Heart right ventricle (tissue), 16 donors: ENCODE measurements at regions of chr9 and their contacts with region 1.

Region 1: DNA sequence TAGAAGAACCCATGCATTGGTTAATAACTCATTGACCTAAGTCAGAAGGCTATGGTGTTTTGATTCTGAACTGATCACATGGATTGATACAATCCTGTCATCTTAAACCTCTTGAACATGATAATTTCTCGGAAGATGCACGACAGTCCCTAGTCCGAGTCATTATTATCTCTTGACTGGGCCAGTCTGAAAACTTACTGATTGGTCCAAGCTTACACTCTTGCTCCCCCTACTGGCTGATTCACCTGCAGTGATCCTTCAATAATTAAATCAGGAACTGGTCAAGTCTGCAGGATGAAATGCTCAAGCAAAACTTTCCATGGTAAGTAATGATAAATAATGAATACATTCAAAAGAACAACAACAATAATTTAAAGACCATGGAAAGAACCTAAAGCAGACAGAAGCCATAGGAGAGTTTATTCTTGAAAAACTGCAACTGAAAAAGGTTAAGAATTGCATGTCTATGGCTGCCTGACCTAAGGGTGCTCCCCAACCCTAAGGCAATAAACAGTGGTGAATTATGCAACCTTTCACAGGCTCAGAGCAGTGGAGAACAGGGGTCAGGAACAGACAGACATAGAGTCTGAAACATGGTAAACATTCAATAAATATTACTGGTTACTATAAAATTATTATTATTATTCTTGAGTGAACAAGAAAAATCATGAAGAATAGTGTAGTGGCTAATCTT is 79.3 kb downstream of the BRINP1 start:
- DNase-seq: peak in 1 of 2 donors; percentile 74
- ATAC-seq: peak in 4 of 8 donors; percentile 51 to 64 (median 60)
- H3K4me3 ChIP-seq: no peak overlapping the region
- H3K27ac ChIP-seq: no peak overlapping the region
- H3K4me1 ChIP-seq: no peaks in the 10 kb centered on the region
- H3K27me3 ChIP-seq: no peaks in the 10 kb centered on the region
- CTCF ChIP-seq: peak; percentile 76 to 87 (median 79)

Region 2: DNA sequence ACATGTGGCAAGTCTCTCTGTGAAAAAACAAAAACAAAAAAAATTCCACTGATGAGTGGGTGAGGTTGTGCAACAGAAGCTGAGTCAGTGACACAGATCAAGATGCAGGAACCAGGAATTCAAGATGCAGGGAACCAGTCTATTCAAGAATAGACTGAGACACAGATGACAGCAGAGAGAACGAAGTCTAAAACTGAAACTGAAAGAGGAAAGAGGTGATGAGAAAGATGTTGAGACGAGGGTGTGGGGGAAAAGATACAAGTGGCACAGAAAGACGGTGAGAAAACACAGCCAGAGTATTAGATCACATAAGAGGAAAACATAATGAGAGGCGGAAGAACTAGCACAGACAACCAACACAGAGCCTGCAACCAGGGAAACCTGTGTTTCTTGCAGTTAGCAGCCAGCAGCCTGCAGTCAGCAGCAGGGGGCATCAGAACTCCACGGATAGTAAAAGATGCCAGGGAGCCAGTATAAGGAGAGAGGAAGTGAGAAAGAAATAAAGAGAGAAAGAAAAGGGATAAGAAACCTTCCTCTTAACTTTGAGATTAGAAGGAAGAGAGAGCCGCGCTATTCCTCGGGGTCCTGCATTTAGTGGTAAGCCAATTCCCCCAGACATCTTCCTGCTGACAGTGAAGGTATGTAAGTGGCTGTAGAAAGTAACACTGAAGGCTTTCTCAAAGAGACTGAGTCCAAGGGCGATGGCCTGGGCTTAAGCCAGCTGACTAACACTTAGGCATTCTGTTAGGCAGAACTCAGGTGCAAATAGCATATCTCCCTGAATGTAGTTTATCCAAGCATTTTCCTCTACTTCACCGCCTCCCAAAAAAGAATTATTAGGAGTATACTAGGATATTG is 1506.7 kb before region 1 on chr9:
- intact Hi-C with region 1: loop called in 3 of 10 experiments (anchors 10 kb)
- DNase-seq: peak; percentile 52 to 78
- ATAC-seq: peak; percentile 70 to 94 (median 93)
- H3K4me3 ChIP-seq: peak overlapping the region in 9 of 10 donors; percentile 11 to 58 (median 50)
- H3K27ac ChIP-seq: peak overlapping the region in 7 of 10 donors; percentile 25 to 87 (median 48)
- H3K4me1 ChIP-seq: peaks cover 0 to 42% (median 16%) of the 10 kb centered on the region in 9 donors
- H3K27me3 ChIP-seq: no peaks in the 10 kb centered on the region
- CTCF ChIP-seq: peak; percentile 58 to 94 (median 82)

Region 3: GRCh38 chr9:118595719-118596305 is 694.1 kb before region 1 on chr9:
- intact Hi-C with region 1: loop called in 1 of 10 experiments (anchors 10 kb)
- DNase-seq: peak in 1 of 2 donors; percentile 5
- ATAC-seq: peak in 1 of 8 donors; percentile 73
- H3K4me3 ChIP-seq: no peak overlapping the region
- H3K27ac ChIP-seq: no peak overlapping the region
- H3K4me1 ChIP-seq: no peaks in the 10 kb centered on the region
- H3K27me3 ChIP-seq: peaks cover 0 to 4% (median 0%) of the 10 kb centered on the region in 7 donors
- CTCF ChIP-seq: peak in 7 of 9 donors; percentile 17 to 51 (median 38)

Region 4: GRCh38 chr9:118836891-118837290 is 453.0 kb before region 1 on chr9:
- intact Hi-C with region 1: loop called in 1 of 10 experiments (anchors 10 kb)
- DNase-seq: no peak
- ATAC-seq: no peak
- H3K4me3 ChIP-seq: no peak overlapping the region
- H3K27ac ChIP-seq: no peak overlapping the region
- H3K4me1 ChIP-seq: no peaks in the 10 kb centered on the region
- H3K27me3 ChIP-seq: no peaks in the 10 kb centered on the region
- CTCF ChIP-seq: no peak

Region 5: GRCh38 chr9:119588874-119589744 is 299.2 kb after region 1 on chr9:
- intact Hi-C with region 1: no loop called
- DNase-seq: no peak
- ATAC-seq: no peak
- H3K4me3 ChIP-seq: no peak overlapping the region
- H3K27ac ChIP-seq: no peak overlapping the region
- H3K4me1 ChIP-seq: no peaks in the 10 kb centered on the region
- H3K27me3 ChIP-seq: peaks cover 0 to 11% (median 4%) of the 10 kb centered on the region in 7 donors
- CTCF ChIP-seq: no peak